Mammary epithelial cell (primary cell): ENCODE measurements at regions of chr20 and their contacts with region 1.

Region 1: DNA sequence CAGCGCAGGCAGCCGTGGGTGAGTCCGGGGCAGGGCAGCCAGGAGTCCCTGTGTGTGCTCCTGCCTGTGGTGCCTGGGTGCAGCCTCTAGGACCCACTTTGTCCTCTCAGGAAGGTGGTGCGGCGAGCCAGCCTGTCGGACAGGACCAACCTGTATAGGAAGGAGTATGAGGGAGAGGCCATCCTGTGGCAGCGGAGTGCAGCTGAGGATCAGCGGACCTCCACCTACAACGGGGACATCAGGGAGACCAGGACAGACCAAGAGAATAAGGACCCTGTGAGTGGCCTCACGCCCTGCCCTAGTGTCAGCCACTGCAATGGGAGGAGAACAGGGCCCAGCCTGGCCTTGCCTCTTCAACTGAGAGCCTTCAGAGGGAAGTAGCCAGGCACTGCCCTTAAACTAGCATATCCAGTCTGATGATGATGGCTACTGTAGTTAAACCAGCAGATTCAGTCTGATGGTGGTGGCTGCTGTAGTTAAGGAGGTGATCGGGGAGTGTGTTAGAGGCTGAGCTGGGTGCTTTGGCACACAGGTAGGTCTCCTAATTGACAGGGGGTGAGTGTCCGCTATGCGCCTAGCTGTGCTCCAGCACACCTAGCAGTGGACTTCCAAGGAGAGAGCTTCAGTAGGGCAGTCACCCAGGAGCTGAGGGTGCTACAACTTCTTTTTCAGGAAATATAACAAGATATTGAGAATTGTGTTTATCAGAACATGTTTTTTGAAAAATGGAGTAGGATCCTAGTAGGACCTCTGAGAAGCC is 18.1 kb upstream of the FAM83D start:
- DNase-seq: no peak
- H3K4me3 ChIP-seq: no peak overlapping the region
- H3K27ac ChIP-seq: no peak overlapping the region
- H3K4me1 ChIP-seq: no peaks in the 10 kb centered on the region
- H3K27me3 ChIP-seq: no peaks in the 10 kb centered on the region
- CTCF ChIP-seq: no peak

Region 2: DNA sequence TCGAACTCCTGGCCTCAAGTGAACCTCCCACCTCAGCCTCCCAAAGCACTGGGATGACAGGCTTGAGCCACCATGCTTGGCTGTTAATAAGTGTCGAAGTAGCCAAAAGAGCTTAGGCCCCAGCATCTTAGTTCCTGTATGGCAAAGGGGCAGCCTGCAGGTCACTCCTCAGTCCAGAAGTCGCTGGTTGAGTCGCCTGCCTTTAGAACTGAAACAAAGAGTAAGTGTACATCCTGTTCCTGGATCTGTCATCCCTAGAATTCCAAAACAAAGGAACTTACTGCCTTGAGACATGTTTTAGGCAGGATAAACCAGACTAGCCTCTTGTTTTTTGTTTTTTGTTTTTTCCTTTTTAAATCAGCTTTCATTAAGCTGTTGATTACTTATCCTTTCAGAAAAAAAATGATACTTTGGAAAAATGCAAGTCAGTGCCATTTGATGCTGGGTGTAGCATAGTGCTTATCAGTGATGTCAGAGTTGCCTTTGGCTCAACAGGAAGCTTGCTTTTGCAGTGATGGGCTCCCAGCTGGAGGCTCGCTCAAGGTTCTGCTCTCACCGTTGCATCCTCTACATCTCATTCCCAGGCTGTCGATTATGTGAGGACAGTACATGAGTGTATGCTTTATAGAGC is 150.8 kb before region 1 on chr20:
- CTCF ChIA-PET with region 1: no interaction called
- dilution Hi-C with region 1: no loop called
- in situ Hi-C with region 1: no loop called
- intact Hi-C with region 1: no loop called
- DNase-seq: no peak
- H3K4me3 ChIP-seq: no peak overlapping the region
- H3K27ac ChIP-seq: no peak overlapping the region
- H3K4me1 ChIP-seq: no peaks in the 10 kb centered on the region
- H3K27me3 ChIP-seq: no peaks in the 10 kb centered on the region
- CTCF ChIP-seq: no peak

Region 3: DNA sequence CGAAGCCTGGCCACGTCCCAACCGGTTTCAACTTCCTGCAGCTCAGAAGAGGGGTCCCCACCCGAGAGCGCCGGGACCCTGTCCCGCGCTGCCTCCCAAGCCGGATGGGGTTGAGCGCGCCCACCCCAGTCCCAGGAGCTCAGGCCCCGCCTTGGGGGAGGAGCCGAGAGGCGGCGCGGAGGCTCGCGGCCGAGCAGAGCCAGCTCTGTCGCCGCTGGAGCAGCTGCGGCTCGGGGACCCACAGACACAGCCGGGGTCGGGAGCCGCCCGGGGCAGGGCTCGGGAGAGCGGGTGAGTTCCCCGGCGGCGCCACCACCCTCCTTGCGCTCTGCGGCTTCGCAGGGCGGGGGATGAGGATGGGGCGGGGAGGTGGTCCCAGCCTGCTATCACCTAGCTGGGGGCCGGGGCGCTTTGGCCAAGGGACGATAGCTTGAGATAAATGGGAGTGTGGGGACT is 102.6 kb before region 1 on chr20 and contains the start of gene PPP1R16B:
- CTCF ChIA-PET with region 1: no interaction called
- dilution Hi-C with region 1: loop called (anchors 5 kb)
- in situ Hi-C with region 1: no loop called
- intact Hi-C with region 1: no loop called
- DNase-seq: no peak
- H3K4me3 ChIP-seq: peak within 1 kb of the TSS in 2 of 3 experiments; percentile 12 to 16
- H3K27ac ChIP-seq: no peak within 1 kb of the TSS
- H3K4me1 ChIP-seq: peaks cover 4% of the 10 kb centered on the region
- H3K27me3 ChIP-seq: peaks cover 22% of the 10 kb centered on the region
- CTCF ChIP-seq: no peak
- total RNA-seq, gene PPP1R16B: under 0.01 TPM in 1 of 2 donors, not detected in the other

Region 4: DNA sequence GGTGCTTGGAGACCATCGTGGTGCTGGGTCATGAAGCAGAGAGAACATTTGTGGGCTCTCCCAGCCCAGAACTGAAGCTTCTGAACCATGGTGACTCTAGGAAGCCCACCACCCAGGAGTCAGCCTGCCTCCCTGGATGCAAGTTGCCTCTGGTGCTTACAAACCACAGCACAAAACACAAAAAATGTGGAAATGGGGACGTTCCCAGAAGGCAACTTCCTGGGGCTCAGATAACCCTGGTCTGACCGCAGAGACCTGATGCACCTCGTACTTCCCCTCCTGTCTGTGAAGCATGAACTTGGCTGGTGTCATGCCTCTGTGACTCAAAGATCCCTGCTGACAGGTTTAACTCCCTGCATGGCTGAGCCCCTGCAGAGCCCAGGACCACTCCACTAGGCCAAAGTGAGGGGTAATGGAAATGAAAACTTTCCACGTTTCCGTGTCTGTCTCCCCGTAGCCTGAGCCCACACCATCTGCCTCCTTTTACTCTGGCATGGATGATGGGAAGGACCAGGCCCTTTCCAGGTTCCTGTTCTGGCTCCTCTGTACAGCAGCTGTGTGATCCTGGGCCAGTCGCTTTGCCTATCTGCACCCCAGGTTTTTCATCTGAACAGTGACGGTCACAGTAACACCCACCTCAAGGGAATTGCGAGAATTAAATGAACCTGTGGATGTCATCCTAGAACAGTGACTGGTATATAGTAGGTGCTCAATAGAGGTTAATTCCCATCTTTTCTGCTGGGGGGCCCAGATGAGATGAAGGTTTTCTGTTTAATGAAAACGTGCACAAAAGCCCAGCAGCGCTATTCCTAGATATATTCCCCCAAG is 44.9 kb before region 1 on chr20:
- CTCF ChIA-PET with region 1: no interaction called
- dilution Hi-C with region 1: loop called (anchors 5 kb)
- in situ Hi-C with region 1: no loop called
- intact Hi-C with region 1: no loop called
- DNase-seq: no peak
- H3K4me3 ChIP-seq: no peak overlapping the region
- H3K27ac ChIP-seq: no peak overlapping the region
- H3K4me1 ChIP-seq: no peaks in the 10 kb centered on the region
- H3K27me3 ChIP-seq: no peaks in the 10 kb centered on the region
- CTCF ChIP-seq: no peak

Region 5: GRCh38 chr20:38990728-38991127 is 82.6 kb after region 1 on chr20:
- CTCF ChIA-PET with region 1: no interaction called
- dilution Hi-C with region 1: loop called (anchors 5 kb)
- in situ Hi-C with region 1: no loop called
- intact Hi-C with region 1: no loop called
- DNase-seq: no peak
- H3K4me3 ChIP-seq: no peak overlapping the region
- H3K27ac ChIP-seq: no peak overlapping the region
- H3K4me1 ChIP-seq: peaks cover 7% of the 10 kb centered on the region
- H3K27me3 ChIP-seq: no peaks in the 10 kb centered on the region
- CTCF ChIP-seq: no peak

Region 6: GRCh38 chr20:39066471-39067242 is 158.6 kb after region 1 on chr20:
- CTCF ChIA-PET with region 1: no interaction called
- dilution Hi-C with region 1: loop called (anchors 5 kb)
- in situ Hi-C with region 1: no loop called
- intact Hi-C with region 1: no loop called
- DNase-seq: no peak
- H3K4me3 ChIP-seq: no peak overlapping the region
- H3K27ac ChIP-seq: no peak overlapping the region
- H3K4me1 ChIP-seq: peaks cover 18% of the 10 kb centered on the region
- H3K27me3 ChIP-seq: no peaks in the 10 kb centered on the region
- CTCF ChIP-seq: no peak

Region 7: DNA sequence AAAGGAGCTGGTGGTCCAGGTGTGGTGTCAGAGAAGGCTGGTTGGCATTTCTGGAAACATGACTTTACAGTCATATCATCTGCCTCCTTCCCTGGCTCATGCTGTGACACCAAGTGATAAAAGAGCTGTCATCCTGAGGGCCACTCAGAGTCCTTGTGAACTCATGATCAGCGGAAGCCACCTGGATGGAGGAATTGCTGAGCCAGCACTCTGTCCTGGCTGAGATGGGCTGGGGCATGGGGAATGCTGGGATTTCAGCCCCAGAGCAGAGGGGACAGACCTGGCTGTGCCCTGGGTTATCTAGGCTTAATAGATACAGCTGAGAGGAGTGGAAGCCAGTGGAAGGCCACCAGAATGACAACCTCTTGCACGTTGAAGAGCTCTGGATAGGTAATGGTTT is 268.4 kb after region 1 on chr20:
- CTCF ChIA-PET with region 1: no interaction called
- dilution Hi-C with region 1: no loop called
- in situ Hi-C with region 1: no loop called
- intact Hi-C with region 1: no loop called
- DNase-seq: no peak
- H3K4me3 ChIP-seq: no peak overlapping the region
- H3K27ac ChIP-seq: no peak overlapping the region
- H3K4me1 ChIP-seq: no peaks in the 10 kb centered on the region
- H3K27me3 ChIP-seq: no peaks in the 10 kb centered on the region
- CTCF ChIP-seq: no peak

Region 8: GRCh38 chr20:39446397-39446796 is 538.3 kb after region 1 on chr20:
- CTCF ChIA-PET with region 1: no interaction called
- dilution Hi-C with region 1: no loop called
- in situ Hi-C with region 1: no loop called
- intact Hi-C with region 1: no loop called
- DNase-seq: no peak
- H3K4me3 ChIP-seq: no peak overlapping the region
- H3K27ac ChIP-seq: no peak overlapping the region
- H3K4me1 ChIP-seq: no peaks in the 10 kb centered on the region
- H3K27me3 ChIP-seq: no peaks in the 10 kb centered on the region
- CTCF ChIP-seq: no peak

Region 9: DNA sequence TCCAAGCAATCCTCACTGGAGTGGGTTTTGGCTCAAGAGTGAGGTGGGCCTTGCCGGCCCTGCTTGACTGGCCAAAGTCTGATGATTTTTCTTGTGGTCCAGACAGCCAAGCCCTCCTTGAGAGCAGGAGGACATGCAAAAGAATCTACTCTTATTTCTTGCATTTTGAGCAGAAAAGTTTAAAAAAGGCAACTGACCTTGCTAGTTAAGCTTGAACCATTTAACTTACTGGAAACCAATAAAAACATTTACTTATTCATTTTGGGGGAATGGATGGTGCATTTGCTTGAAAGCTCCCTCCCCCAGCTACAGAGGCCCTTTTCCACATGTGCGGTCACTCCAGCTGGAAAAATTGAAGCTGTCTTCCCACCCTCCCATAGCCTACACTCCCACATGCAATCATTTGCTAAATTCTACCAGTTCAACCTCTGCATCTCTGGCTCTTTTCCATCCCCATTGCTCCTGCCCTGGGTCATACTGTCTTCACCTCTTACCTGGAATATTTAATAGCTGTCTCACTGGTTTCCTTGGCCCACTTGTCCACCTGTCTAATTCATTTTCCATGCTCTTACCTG is 582.0 kb after region 1 on chr20:
- CTCF ChIA-PET with region 1: no interaction called
- dilution Hi-C with region 1: no loop called
- in situ Hi-C with region 1: no loop called
- intact Hi-C with region 1: no loop called
- DNase-seq: no peak
- H3K4me3 ChIP-seq: no peak overlapping the region
- H3K27ac ChIP-seq: no peak overlapping the region
- H3K4me1 ChIP-seq: no peaks in the 10 kb centered on the region
- H3K27me3 ChIP-seq: no peaks in the 10 kb centered on the region
- CTCF ChIP-seq: no peak